ENCODE measurements at regions of chr21 and their contacts with region 1.

Region 1: DNA sequence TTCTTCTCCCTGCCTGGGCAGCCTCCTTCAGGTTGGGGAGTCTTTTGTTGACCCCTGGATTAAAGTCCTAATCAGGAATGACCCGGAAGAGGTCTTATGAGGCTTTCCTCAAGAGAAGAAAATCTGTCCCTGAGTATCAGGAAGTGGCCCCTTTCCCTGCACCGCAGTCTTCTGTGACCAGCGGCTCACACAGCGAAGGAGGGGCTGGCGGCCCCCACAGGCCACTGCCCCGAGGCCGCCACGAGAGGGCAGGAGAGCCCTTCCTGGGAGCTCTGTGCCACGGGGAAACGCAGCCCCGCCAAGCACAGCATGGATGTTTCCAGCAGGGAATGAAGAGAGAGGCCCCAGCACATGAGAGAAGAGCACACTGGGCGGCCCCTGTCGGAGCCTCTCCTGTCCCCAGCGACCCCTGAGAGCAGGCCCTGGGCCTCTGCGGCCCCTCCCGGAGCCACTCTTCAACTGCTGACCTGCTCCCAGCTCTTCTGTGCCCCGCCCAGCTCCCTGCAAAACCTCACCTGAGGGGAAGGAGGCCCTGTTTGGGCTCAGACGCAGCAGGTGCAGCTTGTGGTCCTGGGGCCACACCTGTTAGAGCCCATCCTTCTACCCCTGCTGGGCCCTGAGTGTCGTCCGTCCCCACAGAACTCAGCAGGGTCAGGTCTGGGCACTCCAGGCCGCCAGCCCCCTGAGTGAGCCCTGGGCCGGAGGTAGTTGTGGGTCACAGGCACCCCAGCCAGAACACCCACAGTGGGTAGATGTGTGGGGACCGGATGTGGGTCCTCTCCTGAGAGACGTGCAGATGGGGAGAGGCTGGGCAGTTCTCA is 4.9 kb upstream of the POFUT2 start:
- DNase-seq: peak; percentile 83
- H3K4me3 Mint-ChIP-seq: no peak overlapping the region
- H3K27ac Mint-ChIP-seq: no peak overlapping the region
- H3K4me1 Mint-ChIP-seq: no peaks in the 10 kb centered on the region
- H3K27me3 Mint-ChIP-seq: no peaks in the 10 kb centered on the region
- CTCF ChIP-seq: peak; percentile 90

Region 2: GRCh38 chr21:45439161-45439872 is 146.7 kb after region 1 on chr21:
- CTCF ChIA-PET with region 1: no interaction called
- intact Hi-C with region 1: loop called (anchors 2 kb)
- DNase-seq: peak; percentile 79
- H3K4me3 Mint-ChIP-seq: peak overlapping the region; percentile 17
- H3K27ac Mint-ChIP-seq: no peak overlapping the region
- H3K4me1 Mint-ChIP-seq: no peaks in the 10 kb centered on the region
- H3K27me3 Mint-ChIP-seq: no peaks in the 10 kb centered on the region
- CTCF ChIP-seq: peak; percentile 62

Measured in Calu3 (cell line).